ENCODE measurements at regions of chr11 and their contacts with region 1.

Region 1: DNA sequence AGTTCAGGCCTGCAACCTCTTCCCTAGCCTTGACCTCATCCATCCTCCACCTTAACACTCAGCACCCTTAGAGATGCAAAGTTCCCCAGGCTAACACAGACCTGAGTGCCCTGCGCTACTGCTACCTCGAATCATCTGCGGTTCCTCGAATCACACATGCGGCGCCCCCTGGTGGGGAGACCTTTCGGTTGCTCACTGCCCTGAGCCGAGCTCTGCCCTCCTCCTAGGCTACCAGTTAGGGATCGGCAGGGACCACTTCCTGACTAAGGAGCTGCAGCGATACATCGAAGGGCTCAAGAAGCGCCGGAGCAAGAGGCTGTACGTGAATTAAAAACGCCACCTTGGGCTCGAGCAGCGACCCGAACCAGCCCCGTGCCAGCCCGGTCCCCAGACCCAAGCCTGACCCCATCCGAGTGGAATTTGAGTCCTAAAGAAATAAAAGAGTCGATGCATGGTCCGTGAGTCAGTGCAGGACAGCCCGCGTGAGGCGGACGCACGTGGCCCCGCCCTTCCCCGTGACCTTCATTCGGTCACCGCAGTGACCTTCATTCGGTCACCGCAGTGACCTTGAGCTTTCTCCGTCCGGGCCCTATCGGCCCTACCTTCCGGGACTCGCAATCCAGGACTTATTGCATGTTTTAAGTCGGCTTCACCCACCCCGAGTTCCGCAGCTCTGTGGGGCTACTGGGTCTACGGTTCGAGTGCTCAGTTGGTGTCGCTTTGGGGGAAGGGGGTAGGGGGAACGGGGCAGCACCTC is 830 bp upstream of the ESRRA start:
- DNase-seq: peak; percentile 85
- ATAC-seq: peak; percentile 60
- H3K4me3 ChIP-seq: peak overlapping the region; percentile 72 to 96
- H3K27ac ChIP-seq: peak overlapping the region; percentile 95
- H3K4me1 ChIP-seq: peaks cover 15% of the 10 kb centered on the region
- H3K27me3 ChIP-seq: no peaks in the 10 kb centered on the region
- CTCF ChIP-seq: peak; percentile 99

Region 2: GRCh38 chr11:62889484-62890437 is 1414.7 kb before region 1 on chr11:
- CTCF ChIA-PET with region 1: interaction called, 10 read pairs
- POLR2A ChIA-PET with region 1: no interaction called
- in situ Hi-C with region 1: no loop called
- intact Hi-C with region 1: no loop called
- DNase-seq: peak; percentile 57
- ATAC-seq: peak; percentile 67
- H3K4me3 ChIP-seq: no peak overlapping the region
- H3K27ac ChIP-seq: peak overlapping the region; percentile 60
- H3K4me1 ChIP-seq: peaks cover 30% of the 10 kb centered on the region
- H3K27me3 ChIP-seq: no peaks in the 10 kb centered on the region
- CTCF ChIP-seq: no peak

Region 3: GRCh38 chr11:63909591-63910506 is 394.6 kb before region 1 on chr11:
- CTCF ChIA-PET with region 1: no interaction called
- POLR2A ChIA-PET with region 1: no interaction called
- in situ Hi-C with region 1: no loop called
- intact Hi-C with region 1: no loop called
- DNase-seq: no peak
- ATAC-seq: peak; percentile 32; the same call in 1 of the 2 replicates
- H3K4me3 ChIP-seq: no peak overlapping the region
- H3K27ac ChIP-seq: no peak overlapping the region
- H3K4me1 ChIP-seq: peaks cover 9% of the 10 kb centered on the region
- H3K27me3 ChIP-seq: no peaks in the 10 kb centered on the region
- CTCF ChIP-seq: no peak

Region 4: DNA sequence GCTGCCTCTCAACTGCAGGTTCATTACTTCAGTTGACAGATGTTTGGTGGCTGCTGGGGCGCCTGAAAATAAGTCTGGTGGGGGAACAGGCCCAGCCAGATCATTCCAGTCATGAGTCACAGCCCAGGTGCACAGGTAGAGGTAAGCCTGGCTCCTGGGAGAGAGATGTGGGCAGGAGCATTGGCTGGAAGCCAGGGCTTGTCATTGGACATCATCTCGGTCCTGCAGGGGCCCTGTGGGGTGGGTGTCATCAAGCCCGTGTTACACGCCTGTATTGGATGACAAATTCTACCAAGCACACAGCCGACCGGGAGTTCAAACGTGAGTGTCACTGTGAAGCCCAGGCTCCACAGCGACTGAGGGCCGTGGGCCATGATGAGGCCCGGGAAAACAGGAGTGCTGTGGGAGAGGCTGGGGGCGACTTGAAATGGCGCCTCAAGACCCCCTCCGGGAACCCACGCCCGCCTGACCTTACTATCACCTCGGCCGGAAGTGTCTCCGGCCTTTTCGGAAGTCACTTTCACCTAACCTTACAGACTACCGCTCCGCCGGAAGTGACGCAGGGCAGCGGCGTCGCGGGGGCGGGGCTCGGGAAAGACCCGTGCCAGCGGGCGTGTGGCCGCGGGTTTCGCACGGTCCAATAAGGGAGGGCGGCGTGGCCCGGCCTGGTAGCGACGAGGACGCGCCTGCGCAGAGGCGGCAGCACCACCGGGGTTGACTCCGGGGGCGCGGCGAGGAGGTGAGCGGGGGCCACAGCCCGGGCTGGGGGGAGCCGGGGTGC is 63.9 kb before region 1 on chr11 and contains the start of gene FKBP2:
- CTCF ChIA-PET with region 1: no interaction called
- POLR2A ChIA-PET with region 1: no interaction called
- in situ Hi-C with region 1: no loop called
- intact Hi-C with region 1: loop called (anchors 10 kb)
- DNase-seq: peak; percentile 78
- ATAC-seq: peak; percentile 69
- H3K4me3 ChIP-seq: peak within 1 kb of the TSS; percentile 59 to 60
- H3K27ac ChIP-seq: peak within 1 kb of the TSS; percentile 97
- H3K4me1 ChIP-seq: peaks cover 30% of the 10 kb centered on the region
- H3K27me3 ChIP-seq: no peaks in the 10 kb centered on the region
- CTCF ChIP-seq: no peak
- total RNA-seq, gene FKBP2: 71.8 TPM

Region 5: GRCh38 chr11:64284048-64284961 is 20.2 kb before region 1 on chr11 and contains the start of gene BAD:
- CTCF ChIA-PET with region 1: interaction called, 20 read pairs
- POLR2A ChIA-PET with region 1: interaction called, 10 read pairs
- in situ Hi-C with region 1: no loop called
- intact Hi-C with region 1: no loop called
- DNase-seq: no peak
- ATAC-seq: peak; percentile 92
- H3K4me3 ChIP-seq: peak within 1 kb of the TSS; percentile 57 to 98
- H3K27ac ChIP-seq: peak within 1 kb of the TSS; percentile 83
- H3K4me1 ChIP-seq: peaks cover 25% of the 10 kb centered on the region
- H3K27me3 ChIP-seq: no peaks in the 10 kb centered on the region
- CTCF ChIP-seq: no peak
- total RNA-seq, gene BAD: 77.7 TPM

Region 6: GRCh38 chr11:64291752-64292459 is 12.6 kb before region 1 on chr11:
- CTCF ChIA-PET with region 1: interaction called, 12 read pairs
- POLR2A ChIA-PET with region 1: interaction called, 4 read pairs
- in situ Hi-C with region 1: no loop called
- intact Hi-C with region 1: no loop called
- DNase-seq: no peak
- ATAC-seq: peak; percentile 23; the same call in 1 of the 2 replicates
- H3K4me3 ChIP-seq: peak overlapping the region; percentile 11 to 37; a peak in 3 of 4 replicates
- H3K27ac ChIP-seq: no peak overlapping the region
- H3K4me1 ChIP-seq: peaks cover 11% of the 10 kb centered on the region
- H3K27me3 ChIP-seq: no peaks in the 10 kb centered on the region; the same call in none of the 2 replicates
- CTCF ChIP-seq: no peak

Measured in Panc1 (cell line).